Activated CD8-positive, alpha-beta T cell treated with anti-CD3 and anti-CD28 coated beads, Interleukin-2, amount 10 ng/mL, durations not matched to agents 7 days and 5 days (primary cell): ENCODE measurements at regions of chr13 and their contacts with region 1.

Region 1: DNA sequence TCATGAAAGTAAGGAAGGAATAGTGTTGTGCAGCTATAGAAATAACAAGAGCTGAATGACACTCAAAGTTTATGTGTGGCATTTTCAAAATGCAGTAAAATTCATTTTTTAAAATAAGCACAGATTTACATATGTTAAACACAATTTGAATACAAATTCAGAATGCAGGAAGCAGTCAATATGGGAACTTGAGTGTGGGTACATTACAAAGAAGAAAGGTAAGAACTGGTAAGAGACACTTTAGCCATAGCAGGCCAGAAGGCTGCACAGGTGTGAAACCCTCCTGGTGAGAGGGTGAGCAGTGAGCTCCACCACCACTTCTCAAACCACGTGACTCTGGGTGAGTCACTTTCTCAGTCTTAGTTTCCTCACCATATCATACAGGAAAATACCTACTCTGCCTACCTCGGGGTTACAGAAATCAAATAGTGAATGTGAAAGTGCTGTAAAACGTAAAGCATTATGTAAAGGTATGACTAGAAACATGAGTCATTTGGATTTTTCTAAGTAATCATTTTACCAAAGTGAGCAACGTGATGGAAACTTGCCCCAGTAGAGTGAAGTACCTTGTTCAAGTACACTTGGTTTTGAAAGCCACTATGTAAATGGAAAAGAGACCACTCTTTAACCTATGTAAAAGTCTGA is 40.5 kb downstream of the USP12 start:
- DNase-seq: peak; percentile 85
- ATAC-seq: peak; percentile 98
- H3K4me3 Mint-ChIP-seq: peak overlapping the region; percentile 26
- H3K27ac Mint-ChIP-seq: peak overlapping the region; percentile 76
- H3K4me1 Mint-ChIP-seq: peaks cover 72% of the 10 kb centered on the region
- H3K27me3 Mint-ChIP-seq: no peaks in the 10 kb centered on the region

Region 2: DNA sequence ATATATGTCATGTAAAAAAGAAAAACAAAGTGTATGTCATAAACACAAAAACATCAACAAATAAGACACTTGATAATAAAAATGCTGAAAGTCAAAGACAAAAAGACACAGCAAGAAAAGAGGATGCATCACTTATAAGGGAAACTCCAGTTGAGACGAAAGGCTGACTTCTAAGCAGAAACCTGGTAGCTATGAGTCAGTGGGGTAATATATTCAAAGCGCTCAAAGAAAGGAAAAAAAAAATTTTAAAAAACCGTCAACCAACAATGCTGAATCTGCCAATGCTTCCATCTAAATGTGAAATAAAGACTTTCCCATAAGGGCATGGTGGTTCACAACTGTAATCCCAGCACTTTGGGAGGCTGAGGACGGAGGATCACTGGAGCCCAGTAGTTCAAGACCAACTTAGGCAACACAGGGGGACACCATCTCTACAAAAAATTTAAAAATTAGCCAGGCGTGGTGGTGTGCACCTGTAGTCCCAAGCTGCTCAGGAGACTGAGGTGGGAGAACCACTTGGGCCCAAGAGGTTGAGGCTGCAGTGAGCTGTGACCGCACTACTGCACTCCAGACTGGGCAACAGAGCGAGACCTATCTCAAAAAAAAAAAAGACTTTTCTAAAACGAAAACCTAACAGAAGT is 16.5 kb after region 1 on chr13:
- CTCF ChIA-PET with region 1: interaction called, 12 read pairs
- POLR2A ChIA-PET with region 1: interaction called, 11 read pairs
- DNase-seq: no peak
- ATAC-seq: peak; percentile 61
- H3K4me3 Mint-ChIP-seq: no peak overlapping the region
- H3K27ac Mint-ChIP-seq: peak overlapping the region; percentile 68
- H3K4me1 Mint-ChIP-seq: peaks cover 38% of the 10 kb centered on the region
- H3K27me3 Mint-ChIP-seq: no peaks in the 10 kb centered on the region

Region 3: DNA sequence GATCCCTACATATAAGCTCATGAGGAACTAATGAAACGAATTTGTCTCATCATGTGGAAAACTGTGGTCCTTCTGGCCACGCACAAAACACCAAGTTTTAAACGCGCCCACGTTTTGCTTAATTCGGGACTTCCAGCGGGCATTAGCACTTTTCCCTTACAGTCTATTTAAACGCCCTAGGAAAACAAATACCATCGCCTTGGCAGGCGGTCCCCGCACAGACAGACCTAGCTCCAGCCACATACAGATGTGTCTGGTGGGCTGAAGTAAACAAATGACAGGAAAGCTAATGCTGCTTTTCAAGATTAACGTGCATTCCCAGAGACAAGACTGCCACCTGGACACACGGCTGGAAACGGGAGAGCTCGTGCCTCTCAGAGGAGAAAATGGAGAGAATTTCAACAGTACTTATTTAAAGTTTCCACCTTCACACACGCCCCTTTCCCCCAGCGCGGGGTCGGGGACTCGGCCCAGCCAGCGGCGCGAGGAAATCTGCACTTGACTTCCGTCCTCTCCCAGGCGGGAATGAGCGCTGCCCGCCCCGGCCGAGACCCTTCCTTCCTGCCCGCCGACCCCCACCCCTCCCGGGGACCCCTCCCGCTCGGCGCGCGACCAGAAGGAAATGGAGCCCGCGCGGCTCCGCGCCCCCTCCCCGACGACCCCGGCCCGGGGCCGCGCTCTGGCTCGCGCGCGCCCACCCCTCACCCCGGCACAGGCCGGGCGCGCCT is 39.6 kb after region 1 on chr13:
- CTCF ChIA-PET with region 1: interaction called, 7 read pairs
- POLR2A ChIA-PET with region 1: interaction called, 10 read pairs
- DNase-seq: peak; percentile 45
- ATAC-seq: no peak
- H3K4me3 Mint-ChIP-seq: peak overlapping the region; percentile 99
- H3K27ac Mint-ChIP-seq: peak overlapping the region; percentile 95
- H3K4me1 Mint-ChIP-seq: peaks cover 51% of the 10 kb centered on the region
- H3K27me3 Mint-ChIP-seq: no peaks in the 10 kb centered on the region